ENCODE measurements at regions of chr5 and their contacts with region 1.

Region 1: GRCh38 chr5:63923907-63924306 is 38.3 kb downstream of the HTR1A start:
- DNase-seq: no peak

Region 2: DNA sequence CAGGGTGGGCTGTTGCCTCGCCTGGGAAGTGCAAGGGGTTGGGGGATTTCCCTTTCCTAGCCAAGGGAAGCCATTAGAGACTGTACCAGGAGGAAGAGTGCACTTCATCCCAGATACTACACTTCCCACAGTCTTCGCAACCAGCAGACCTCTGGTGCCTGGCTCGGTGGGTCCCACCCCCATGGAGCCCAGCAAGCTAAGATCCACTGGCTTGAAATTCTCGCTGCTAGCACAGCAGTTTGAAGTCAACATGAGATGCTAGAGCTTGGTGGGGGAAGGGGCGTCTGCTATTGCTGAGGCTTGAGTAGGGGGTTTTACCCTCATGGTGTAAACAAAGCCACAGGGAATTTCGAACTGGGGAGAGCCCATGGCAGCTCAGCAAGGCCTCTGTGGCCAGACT is 548.1 kb before region 1 on chr5:
- intact Hi-C with region 1: loop called in 1 of 2 experiments (anchors 5 kb)
- DNase-seq: peak; percentile 66

Region 3: DNA sequence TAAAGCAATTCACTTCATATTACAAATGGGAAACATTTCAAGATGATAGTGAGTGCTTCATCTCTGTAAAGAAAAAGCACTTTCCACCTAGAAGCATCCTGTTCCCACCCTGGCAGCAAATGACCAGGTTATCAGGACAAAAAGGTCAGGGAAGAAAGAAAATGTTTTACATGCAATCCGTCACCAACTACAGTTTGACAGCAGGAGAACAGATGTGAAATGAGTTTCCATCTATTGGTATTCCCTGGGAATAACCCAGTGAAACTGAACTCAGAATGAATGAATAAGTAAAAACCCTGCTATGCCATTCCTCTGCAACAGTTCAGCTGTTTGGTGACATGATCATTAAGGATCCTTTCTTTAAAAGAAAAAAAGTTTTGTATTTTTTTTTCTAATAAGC is 29.2 kb before region 1 on chr5:
- intact Hi-C with region 1: no loop called
- DNase-seq: no peak

Measured in posterior vena cava (tissue), 2 donors.